Kidney (tissue), 22 donors: ENCODE measurements at regions of chr15 and their contacts with region 1.

Region 1: DNA sequence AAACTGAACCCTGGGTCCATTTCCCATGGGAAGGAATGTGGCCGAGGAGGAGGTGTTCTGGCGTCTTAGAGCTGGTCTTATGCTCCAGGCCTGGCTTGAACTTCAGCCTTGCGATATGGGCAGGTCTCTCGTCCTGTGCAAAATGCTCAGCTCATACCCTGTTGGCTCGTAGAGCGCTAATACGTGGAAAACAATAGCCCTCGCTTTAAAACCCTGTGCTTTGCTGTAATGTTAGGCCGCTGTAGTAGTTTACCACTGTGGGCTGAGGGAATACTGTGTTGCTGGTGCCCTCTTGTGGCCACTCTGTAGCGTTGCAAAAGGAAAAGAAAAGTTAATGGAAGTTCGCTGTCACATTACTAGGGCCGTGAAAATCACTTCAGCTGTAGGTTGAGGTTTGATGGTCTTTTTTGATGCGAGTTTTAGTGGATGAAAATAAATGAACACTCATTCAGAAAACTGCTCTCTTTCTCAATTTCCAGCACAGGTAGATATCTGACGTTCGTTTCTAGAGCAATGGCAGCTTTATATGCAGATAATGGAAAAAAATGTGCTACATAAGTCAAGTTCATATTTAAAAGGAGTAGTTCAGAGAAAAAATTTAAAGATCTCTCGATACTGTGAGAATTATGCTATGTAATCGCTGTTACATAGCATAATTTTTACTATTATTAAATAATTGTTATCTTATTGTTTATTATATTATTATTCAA is 92.9 kb downstream of the MCTP2 start:
- DNase-seq: peak in 4 of 5 donors; percentile 52 to 83 (median 79)
- H3K4me3 ChIP-seq: peak overlapping the region in 1 of 3 donors; percentile 2
- H3K27ac ChIP-seq: no peak overlapping the region
- H3K4me1 ChIP-seq: no peaks in the 10 kb centered on the region
- H3K27me3 ChIP-seq: no peaks in the 10 kb centered on the region
- CTCF ChIP-seq: peak; percentile 84

Region 2: GRCh38 chr15:94163999-94164807 is 160.1 kb before region 1 on chr15:
- intact Hi-C with region 1: loop called (anchors 5 kb)
- DNase-seq: peak in 4 of 5 donors; percentile 71 to 90 (median 75)
- H3K4me3 ChIP-seq: no peak overlapping the region
- H3K27ac ChIP-seq: no peak overlapping the region
- H3K4me1 ChIP-seq: no peaks in the 10 kb centered on the region
- H3K27me3 ChIP-seq: no peaks in the 10 kb centered on the region
- CTCF ChIP-seq: peak; percentile 91